Breast epithelium (tissue), 4 donors: ENCODE measurements at regions of chr15 and their contacts with region 1.

Region 1: DNA sequence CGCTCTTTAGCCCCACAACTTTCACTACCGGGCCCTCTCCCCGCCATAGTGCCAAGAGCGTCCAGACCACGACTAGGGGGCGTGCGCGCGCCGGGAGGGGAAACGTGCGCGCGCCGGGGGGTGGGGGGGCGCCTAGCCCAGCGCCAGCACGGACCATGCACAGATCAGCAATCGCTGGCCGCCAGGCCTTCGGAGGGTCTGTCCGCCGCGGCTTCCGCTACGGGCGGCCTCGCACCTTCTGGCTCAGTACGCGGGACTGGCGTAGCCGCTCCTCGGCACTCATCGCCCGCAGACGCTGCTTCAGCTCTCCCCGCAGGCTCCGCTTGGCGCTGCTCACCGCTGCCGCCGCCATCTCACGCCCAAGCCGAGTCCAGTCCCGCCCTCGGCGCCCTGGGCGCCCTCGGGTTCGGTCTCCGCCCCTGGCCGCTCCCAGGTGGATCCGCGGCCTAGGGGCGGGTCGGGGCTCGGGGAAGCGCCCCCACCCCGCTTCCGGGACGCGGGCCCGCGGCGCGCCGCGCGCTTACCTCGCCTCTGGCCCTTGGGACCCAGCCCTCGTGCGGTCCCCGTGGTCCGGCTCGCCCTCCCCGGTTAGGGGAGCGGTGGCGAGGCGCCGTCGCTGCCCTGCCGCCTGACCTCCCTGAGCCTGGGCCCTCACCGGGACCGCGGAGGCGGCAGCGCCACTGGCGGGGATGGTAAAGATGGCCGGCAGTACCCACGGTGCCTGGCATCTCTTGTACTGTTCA is at the start of gene MTHFS:
- DNase-seq: peak; percentile 60 to 73
- H3K4me3 ChIP-seq: peak within 1 kb of the TSS; percentile 54 to 88 (median 82)
- H3K27ac ChIP-seq: peak within 1 kb of the TSS; percentile 98 to 99
- H3K4me1 ChIP-seq: no peaks in the 10 kb centered on the region
- H3K27me3 ChIP-seq: no peaks in the 10 kb centered on the region
- CTCF ChIP-seq: peak in 1 of 3 donors; percentile 23
- POLR2A ChIP-seq: no peak
- total RNA-seq, gene MTHFS: 19.0 to 51.5 (median 30.2) TPM

Region 2: DNA sequence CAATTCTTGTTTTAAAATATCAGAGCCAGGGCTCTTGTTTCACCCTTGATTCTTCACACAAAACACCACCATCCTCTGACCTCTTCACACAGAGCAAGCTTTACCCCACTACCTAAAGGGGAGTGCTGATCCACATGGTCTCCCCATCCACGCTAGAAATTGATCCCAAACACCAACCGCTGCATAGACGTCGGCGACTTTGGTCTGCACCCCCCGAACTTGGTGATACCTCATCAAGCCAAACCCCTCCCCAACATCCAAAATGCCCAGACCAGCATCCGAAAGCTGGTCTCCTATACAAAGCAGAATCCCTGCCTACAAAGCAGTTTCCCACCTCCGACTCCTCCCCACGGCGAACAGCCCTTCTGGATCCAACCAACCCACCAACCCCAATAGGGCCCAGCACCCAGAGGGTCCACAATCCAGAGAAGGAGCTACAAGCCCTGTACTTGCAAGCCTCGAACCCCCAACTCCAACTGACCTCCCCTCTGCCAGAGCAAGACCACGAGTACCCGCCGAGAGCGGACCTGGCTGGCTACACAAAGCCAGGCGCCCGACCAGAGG is 25.8 kb after region 1 on chr15:
- intact Hi-C with region 1: loop called (anchors 1 kb)
- DNase-seq: no peak
- H3K4me3 ChIP-seq: peak overlapping the region; percentile 86 to 93 (median 89)
- H3K27ac ChIP-seq: peak overlapping the region; percentile 97 to 98
- H3K4me1 ChIP-seq: no peaks in the 10 kb centered on the region
- H3K27me3 ChIP-seq: no peaks in the 10 kb centered on the region
- CTCF ChIP-seq: no peak
- POLR2A ChIP-seq: no peak